K562 (cell line): ENCODE measurements at regions of chr9 and their contacts with region 1.

Region 1: DNA sequence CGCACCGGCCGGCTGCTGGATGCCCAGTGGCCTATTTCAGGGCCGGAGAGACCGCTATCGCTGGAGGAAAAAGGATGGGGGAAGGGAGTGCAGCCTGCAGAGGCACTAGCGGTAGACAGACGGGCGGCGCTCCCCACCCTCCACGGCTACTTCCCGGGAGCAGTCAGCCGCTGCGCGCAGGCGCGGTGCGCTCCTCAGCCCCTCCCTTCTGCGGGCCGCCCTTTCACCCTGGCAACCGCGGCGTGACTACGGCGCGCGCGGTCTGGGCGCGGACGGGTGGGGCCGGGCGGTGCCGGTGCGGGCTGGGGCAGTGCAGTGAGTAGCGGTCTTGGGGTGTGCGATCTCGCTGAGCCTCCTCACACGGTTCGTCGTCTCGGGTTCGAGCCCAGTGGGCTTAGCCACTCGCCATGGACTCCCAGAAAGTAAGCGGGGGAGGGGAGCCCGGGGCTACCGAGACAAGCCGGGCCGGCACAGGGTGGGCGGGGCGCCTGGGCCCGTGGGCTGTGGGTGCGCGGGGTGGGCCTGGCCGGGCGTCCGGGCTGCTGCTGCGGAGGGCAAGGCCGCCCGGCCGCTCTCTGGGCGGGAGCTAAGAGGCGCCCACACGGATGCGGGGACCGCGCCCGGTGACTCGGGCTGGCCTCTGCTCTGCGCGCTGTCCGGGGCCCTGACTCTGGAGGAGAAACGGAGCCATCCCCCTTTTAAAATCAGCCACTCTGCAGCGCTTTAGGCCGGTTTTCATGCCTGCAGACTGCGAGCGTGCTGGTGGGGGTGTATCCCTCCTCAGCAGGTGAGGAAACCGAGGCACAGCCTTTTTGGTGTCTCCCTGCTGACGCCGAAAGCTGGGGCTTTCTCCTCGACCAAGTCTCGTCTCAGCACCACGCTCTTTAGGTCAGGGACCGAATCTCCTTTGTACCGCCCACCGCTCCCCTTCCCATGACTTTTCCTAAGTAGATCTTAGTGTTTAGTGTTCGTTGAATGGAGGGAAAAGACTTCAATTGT is at the start of gene FSD1L:
- DNase-seq: peak; percentile 95 to 98 (median 96)
- ATAC-seq: peak; percentile 95
- H3K4me3 ChIP-seq: peak within 1 kb of the TSS; percentile 63
- H3K27ac ChIP-seq: peak within 1 kb of the TSS; percentile 60
- H3K4me1 ChIP-seq: peaks cover 4 to 9% of the 10 kb centered on the region in 2 experiments; a peak in 3 of 5 replicates
- H3K27me3 ChIP-seq: no peaks in the 10 kb centered on the region
- CTCF ChIP-seq: peak in 2 of 3 experiments; percentile 21 to 39; a peak in 2 of 6 replicates
- EP300 ChIP-seq: 0 out of 2 replicates have a peak, but pooled peaks have one; percentile 6
- POLR2A ChIP-seq: peak; percentile 58
- RAD21 ChIP-seq: peak in 1 of 2 experiments; percentile 37; a peak in 2 of 4 replicates
- polyA plus RNA-seq, gene FSD1L: 1.1 to 2.1 TPM

Region 2: GRCh38 chr9:105385381-105385985 is 62.6 kb before region 1 on chr9:
- CTCF ChIA-PET with region 1: no interaction called
- POLR2A ChIA-PET with region 1: no interaction called
- in situ Hi-C with region 1: no loop called
- intact Hi-C with region 1: loop called (anchors 10 kb)
- DNase-seq: peak in 2 of 4 experiments; percentile 13 to 32
- ATAC-seq: peak; percentile 80
- H3K4me3 ChIP-seq: no peak overlapping the region
- H3K27ac ChIP-seq: no peak overlapping the region
- H3K4me1 ChIP-seq: no peaks in the 10 kb centered on the region; a peak in 1 of 5 replicates
- H3K27me3 ChIP-seq: no peaks in the 10 kb centered on the region; a peak in 2 of 5 replicates
- CTCF ChIP-seq: no peak
- EP300 ChIP-seq: 0 out of 2 replicates have a peak, but pooled peaks have one; percentile 19
- POLR2A ChIP-seq: no peak
- RAD21 ChIP-seq: no peak

Region 3: GRCh38 chr9:105557771-105558610 is 109.9 kb after region 1 on chr9 and contains the start of gene FKTN:
- CTCF ChIA-PET with region 1: no interaction called
- POLR2A ChIA-PET with region 1: no interaction called
- in situ Hi-C with region 1: no loop called
- intact Hi-C with region 1: loop called (anchors 5 kb)
- DNase-seq: peak; percentile 85 to 91 (median 90)
- ATAC-seq: peak; percentile 99
- H3K4me3 ChIP-seq: peak within 1 kb of the TSS; percentile 73
- H3K27ac ChIP-seq: no peak within 1 kb of the TSS; the same call in 2 of the 3 replicates
- H3K4me1 ChIP-seq: peaks cover 5% of the 10 kb centered on the region in 2 experiments; a peak in 2 of 5 replicates
- H3K27me3 ChIP-seq: no peaks in the 10 kb centered on the region
- CTCF ChIP-seq: no peak
- EP300 ChIP-seq: no peak
- POLR2A ChIP-seq: peak; percentile 76
- RAD21 ChIP-seq: no peak
- polyA plus RNA-seq, gene FKTN: 5.9 to 6.0 TPM